Heart left ventricle (tissue), 16 donors: ENCODE measurements at regions of chr17 and their contacts with region 1.

Region 1: DNA sequence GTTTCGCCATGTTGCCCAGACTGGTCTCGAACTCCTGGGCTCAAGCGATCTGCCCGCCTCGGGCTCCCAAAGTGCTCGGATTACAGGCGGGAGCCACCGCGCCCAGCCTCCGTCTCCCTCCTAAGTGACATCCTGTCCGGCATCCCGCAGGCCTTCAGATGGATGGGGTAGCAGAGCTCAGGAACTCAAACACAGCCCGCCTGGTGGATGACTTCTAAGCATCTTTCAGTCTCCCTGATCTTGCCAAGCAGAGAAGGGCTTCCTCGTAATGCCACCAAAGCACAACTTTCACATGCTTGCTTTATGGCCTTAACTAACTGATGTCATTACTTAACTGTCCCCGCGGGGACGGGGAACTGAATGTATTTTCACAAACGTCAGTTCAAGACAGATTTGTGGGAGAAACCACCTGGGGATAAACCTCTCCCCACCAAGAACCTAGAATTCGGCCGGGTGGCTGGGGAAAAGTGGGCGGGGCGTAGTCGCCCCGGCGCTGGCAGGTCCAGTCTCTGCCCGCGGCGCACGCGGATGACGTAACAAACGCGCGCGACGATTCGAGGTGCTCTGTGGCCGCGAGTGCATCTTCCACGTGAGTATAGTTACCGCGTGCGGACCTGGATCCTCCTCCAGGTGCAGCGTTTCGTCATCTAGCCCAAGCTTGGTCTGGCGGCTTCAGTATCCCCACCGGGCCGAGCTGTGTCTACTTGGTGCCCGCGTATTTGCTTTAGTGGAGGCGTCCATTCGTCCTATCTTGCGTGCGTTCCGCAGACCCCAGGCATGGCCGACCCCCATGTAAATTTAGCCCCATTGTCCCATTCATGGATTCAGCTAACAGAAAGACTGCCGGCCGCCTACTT is at the start of gene PFAS:
- DNase-seq: peak; percentile 96 to 97 (median 96)
- ATAC-seq: peak; percentile 70 to 84 (median 80)
- H3K4me3 ChIP-seq: peak within 1 kb of the TSS; percentile 34 to 96 (median 69)
- H3K27ac ChIP-seq: peak within 1 kb of the TSS; percentile 79 to 99 (median 96)
- H3K4me1 ChIP-seq: peaks cover 0 to 26% (median 12%) of the 10 kb centered on the region in 12 donors
- H3K27me3 ChIP-seq: no peaks in the 10 kb centered on the region
- CTCF ChIP-seq: peak in 1 of 12 donors; percentile 6
- POLR2A ChIP-seq: peak in 1 of 2 donors; percentile 29
- total RNA-seq, gene PFAS: 7.7 to 23.8 (median 14.1) TPM

Region 2: GRCh38 chr17:8041249-8041928 is 207.6 kb before region 1 on chr17:
- intact Hi-C with region 1: no loop called
- DNase-seq: no peak
- ATAC-seq: peak; percentile 59 to 83 (median 63)
- H3K4me3 ChIP-seq: no peak overlapping the region
- H3K27ac ChIP-seq: peak overlapping the region in 2 of 12 donors; percentile 15 to 45
- H3K4me1 ChIP-seq: peaks cover 0 to 26% (median 0%) of the 10 kb centered on the region in 12 donors
- H3K27me3 ChIP-seq: peaks cover 0 to 27% (median 10%) of the 10 kb centered on the region in 9 donors
- CTCF ChIP-seq: peak; percentile 44 to 72 (median 56)
- POLR2A ChIP-seq: no peak

Region 3: DNA sequence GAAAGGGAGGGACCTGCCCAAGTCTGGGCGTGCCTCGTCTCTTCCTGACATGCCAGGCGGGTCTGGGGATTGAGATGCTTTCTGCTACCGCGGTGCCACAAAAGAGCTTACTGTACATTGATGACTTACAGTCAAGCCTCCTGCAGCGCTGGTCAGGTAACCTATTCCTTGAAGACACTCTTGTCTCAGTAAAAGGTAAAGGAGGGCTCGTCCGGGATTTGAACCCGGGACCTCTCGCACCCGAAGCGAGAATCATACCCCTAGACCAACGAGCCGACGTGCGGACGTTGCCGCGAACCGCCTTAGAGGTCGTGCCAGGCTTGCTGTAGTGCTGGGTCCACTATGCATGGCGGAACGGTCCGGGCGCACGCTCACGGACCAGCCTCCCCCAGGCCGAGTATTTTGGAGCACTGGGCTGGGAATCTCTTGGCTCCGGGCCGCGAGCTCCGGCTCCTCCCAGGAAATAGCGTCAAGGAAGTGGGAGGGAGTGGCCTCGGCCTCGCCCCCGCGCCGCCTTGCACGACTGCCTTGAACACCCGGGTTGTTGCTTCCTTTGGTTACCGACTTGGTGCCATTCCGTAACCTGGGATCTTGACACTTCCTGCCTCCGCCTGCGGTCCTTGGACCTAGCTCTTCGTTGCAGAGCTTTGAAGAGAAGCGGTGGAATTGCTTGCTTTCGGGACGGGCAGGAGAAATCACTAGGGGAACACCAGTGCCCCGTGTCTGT is 26.2 kb before region 1 on chr17:
- intact Hi-C with region 1: loop called in 4 of 10 experiments (anchors 1 to 2 kb)
- DNase-seq: peak; percentile 94 to 97 (median 95)
- ATAC-seq: peak; percentile 70 to 81 (median 74)
- H3K4me3 ChIP-seq: peak overlapping the region; percentile 49 to 82 (median 69)
- H3K27ac ChIP-seq: peak overlapping the region; percentile 93 to 99 (median 98)
- H3K4me1 ChIP-seq: peaks cover 0 to 31% (median 14%) of the 10 kb centered on the region in 12 donors
- H3K27me3 ChIP-seq: no peaks in the 10 kb centered on the region
- CTCF ChIP-seq: no peak
- POLR2A ChIP-seq: peak in 1 of 2 donors; percentile 83

Region 4: GRCh38 chr17:8288336-8289102 is 39.5 kb after region 1 on chr17 and contains the start of gene RANGRF:
- intact Hi-C with region 1: loop called in 7 of 10 experiments (anchors 2 to 5 kb)
- DNase-seq: peak; percentile 91 to 94 (median 93)
- ATAC-seq: peak; percentile 92 to 97 (median 94)
- H3K4me3 ChIP-seq: peak within 1 kb of the TSS; percentile 54 to 98 (median 74)
- H3K27ac ChIP-seq: peak within 1 kb of the TSS; percentile 52 to 99 (median 94)
- H3K4me1 ChIP-seq: peaks cover 0 to 27% (median 14%) of the 10 kb centered on the region in 12 donors
- H3K27me3 ChIP-seq: no peaks in the 10 kb centered on the region
- CTCF ChIP-seq: no peak
- POLR2A ChIP-seq: peak in 1 of 2 donors; percentile 78
- total RNA-seq, gene RANGRF: 22.3 to 33.6 (median 27.1) TPM

Region 5: DNA sequence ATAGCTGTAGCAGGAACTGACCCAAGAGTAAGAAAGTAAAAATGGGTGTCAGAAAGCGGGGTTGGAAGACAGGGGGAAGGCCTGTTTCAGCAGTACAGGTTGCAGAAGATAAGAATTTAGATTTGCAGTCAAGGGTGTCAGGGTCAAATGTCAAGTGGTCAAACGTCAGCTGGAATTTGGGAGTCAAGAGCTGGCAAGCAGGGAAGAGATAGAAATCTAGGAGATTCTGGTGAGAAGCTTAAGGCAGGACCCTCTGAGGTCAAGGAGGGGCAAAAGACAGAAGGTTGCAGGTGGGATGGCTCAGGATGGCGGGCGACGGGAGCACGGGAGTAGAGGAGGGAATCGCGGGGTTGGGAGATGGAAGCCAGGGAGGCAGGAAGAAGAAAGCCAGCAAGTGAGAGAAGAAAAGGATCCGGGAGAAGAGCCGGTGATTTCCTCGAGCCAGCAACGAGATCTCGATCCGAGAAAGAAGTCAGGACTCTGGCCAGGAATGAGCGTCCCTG is 45.9 kb after region 1 on chr17:
- intact Hi-C with region 1: loop called in 7 of 10 experiments (anchors 1 to 5 kb)
- DNase-seq: no peak
- ATAC-seq: peak; percentile 2 to 14 (median 9)
- H3K4me3 ChIP-seq: peak overlapping the region in 11 of 12 donors; percentile 54 to 85 (median 71)
- H3K27ac ChIP-seq: peak overlapping the region; percentile 79 to 99 (median 94)
- H3K4me1 ChIP-seq: peaks cover 0 to 22% (median 10%) of the 10 kb centered on the region in 12 donors
- H3K27me3 ChIP-seq: no peaks in the 10 kb centered on the region
- CTCF ChIP-seq: no peak
- POLR2A ChIP-seq: no peak

Region 6: DNA sequence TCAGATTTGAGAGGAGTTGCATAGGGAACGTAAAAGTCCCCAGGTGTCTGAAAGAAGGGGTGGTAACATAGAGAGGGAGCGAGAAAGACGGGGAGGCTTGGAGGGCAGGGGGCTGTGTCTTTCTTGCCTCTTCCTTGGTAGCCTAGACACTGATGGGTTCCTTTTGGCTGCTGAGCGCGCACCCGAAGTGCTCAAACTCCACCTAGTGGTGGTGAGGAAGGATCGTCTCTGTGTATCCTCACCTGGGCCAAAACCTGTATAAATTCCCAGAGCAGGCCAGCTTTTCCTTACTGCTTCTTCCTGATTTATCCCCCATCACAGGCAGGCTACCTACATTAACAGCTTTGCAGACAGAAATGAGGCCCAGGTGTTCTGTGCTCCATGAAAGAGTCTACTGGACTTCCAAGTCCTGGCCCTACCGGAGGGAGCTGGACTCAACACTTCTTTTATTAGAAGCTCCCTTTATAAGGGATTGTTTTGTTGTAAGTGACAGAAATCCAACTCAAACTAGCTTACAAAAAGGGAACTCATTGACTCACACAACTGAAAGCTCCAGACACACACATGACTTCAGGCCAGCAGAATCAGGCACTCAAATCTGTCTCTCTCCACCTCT is 51.8 kb after region 1 on chr17:
- intact Hi-C with region 1: loop called in 6 of 10 experiments (anchors 1 to 5 kb)
- DNase-seq: peak in 4 of 5 donors; percentile 51 to 79 (median 62)
- ATAC-seq: peak; percentile 82 to 92 (median 90)
- H3K4me3 ChIP-seq: no peak overlapping the region
- H3K27ac ChIP-seq: no peak overlapping the region
- H3K4me1 ChIP-seq: peaks cover 0 to 6% (median 0%) of the 10 kb centered on the region in 12 donors
- H3K27me3 ChIP-seq: no peaks in the 10 kb centered on the region
- CTCF ChIP-seq: peak; percentile 74 to 87 (median 80)
- POLR2A ChIP-seq: no peak

Region 7: DNA sequence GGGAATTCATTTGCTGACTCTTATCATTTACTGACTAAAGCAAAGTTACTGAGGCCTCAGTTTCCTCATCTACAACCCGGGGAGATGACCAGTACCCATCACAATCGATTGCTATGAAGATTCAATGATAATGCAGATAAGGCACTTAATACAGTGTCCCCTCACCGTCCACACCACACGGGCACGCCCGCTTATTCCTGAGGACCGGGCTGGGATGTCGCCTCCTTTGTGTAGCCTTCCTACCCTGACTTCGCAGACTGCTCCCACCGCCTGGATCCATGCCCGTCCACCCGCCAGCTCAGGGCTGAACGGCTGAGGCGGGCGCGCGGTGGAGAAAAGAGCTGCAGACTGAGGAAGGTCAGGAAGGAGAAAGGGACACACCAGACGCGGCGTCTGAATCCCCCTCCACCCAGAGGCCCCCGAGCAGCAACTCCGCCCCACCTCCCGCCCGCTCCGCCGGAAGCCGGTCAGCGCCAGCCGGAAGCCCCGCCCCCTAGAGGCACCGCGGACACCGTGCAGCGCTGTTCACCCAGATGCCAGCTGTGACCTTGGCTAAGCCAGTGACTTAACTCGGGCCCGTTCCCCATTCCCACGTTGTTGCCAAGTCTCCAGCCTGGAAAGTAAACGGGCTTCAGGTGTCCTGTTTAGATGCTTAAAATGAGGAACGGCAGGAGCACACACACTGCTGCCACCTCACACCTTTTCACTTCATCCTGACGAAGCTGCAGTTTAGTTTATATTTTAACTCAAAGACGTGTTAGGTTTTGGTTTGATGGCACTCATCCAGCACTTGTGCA is 127.5 kb after region 1 on chr17 and contains the start of gene KRABD2:
- intact Hi-C with region 1: loop called in 1 of 10 experiments (anchors 5 kb)
- DNase-seq: peak; percentile 93 to 96 (median 95)
- ATAC-seq: peak; percentile 92 to 98 (median 97)
- H3K4me3 ChIP-seq: peak within 1 kb of the TSS; percentile 40 to 97 (median 81)
- H3K27ac ChIP-seq: peak within 1 kb of the TSS; percentile 69 to 98 (median 93)
- H3K4me1 ChIP-seq: peaks cover 0 to 52% (median 35%) of the 10 kb centered on the region in 12 donors
- H3K27me3 ChIP-seq: no peaks in the 10 kb centered on the region
- CTCF ChIP-seq: peak; percentile 35 to 86 (median 51)
- POLR2A ChIP-seq: peak in 1 of 2 donors; percentile 82